Activated CD8-positive, alpha-beta T cell treated with anti-CD3 and anti-CD28 coated beads for 36 hours (primary cell): ENCODE measurements at regions of chr15 and their contacts with region 1.

Region 1: DNA sequence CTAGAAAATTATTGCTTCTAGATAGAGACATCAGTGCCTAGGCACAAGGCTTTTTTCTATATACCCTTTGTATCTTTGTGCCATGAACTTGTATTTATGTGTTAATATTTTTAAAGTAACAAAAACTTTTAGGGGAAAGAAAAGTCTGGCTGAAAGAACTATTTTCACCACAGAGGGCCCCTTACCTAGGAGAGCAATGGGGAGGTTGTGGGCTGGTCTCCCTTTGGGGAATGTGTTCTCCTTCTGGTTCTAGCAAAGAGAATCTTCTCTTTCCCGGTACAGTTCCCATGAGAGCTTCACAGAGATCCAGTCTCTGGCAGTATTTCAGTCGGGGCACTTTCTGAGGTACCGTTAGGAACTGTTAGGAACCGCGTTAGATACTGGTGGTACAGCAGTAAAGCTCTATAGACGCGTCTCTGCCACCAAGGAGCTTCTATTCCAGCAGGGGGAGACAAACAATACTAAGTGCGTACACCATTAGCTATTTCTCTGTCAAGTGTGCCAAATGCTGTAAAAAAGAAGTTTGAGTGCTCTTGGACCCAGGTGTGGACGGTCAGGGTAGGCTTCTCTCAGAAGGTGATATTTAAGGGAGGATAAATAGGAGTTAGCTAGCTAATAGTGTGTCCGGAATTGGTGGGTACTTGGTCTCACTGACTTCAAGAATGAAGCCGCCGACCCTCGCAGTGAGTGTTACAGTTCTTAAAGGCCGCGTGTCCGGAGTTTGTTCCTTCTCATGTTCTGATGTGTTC is 4.6 kb upstream of the EPB42 start:
- DNase-seq: peak; percentile 67
- ATAC-seq: peak; percentile 96
- H3K4me3 Mint-ChIP-seq: no peak overlapping the region
- H3K27ac Mint-ChIP-seq: no peak overlapping the region
- H3K4me1 Mint-ChIP-seq: peaks cover 7% of the 10 kb centered on the region
- H3K27me3 Mint-ChIP-seq: peaks cover 5% of the 10 kb centered on the region
- CTCF ChIP-seq: peak; percentile 82

Region 2: GRCh38 chr15:43194795-43195194 is 30.6 kb before region 1 on chr15:
- CTCF ChIA-PET with region 1: interaction called, 13 read pairs
- POLR2A ChIA-PET with region 1: no interaction called
- intact Hi-C with region 1: no loop called
- DNase-seq: no peak
- ATAC-seq: no peak
- H3K4me3 Mint-ChIP-seq: no peak overlapping the region
- H3K27ac Mint-ChIP-seq: no peak overlapping the region
- H3K4me1 Mint-ChIP-seq: no peaks in the 10 kb centered on the region
- H3K27me3 Mint-ChIP-seq: no peaks in the 10 kb centered on the region
- CTCF ChIP-seq: no peak

Region 3: GRCh38 chr15:43235536-43235935 is 10.2 kb after region 1 on chr15:
- CTCF ChIA-PET with region 1: interaction called, 12 read pairs
- POLR2A ChIA-PET with region 1: no interaction called
- intact Hi-C with region 1: no loop called
- DNase-seq: no peak
- ATAC-seq: no peak
- H3K4me3 Mint-ChIP-seq: no peak overlapping the region
- H3K27ac Mint-ChIP-seq: no peak overlapping the region
- H3K4me1 Mint-ChIP-seq: peaks cover 12% of the 10 kb centered on the region
- H3K27me3 Mint-ChIP-seq: no peaks in the 10 kb centered on the region
- CTCF ChIP-seq: no peak

Region 4: GRCh38 chr15:43268111-43269105 is 43.0 kb after region 1 on chr15:
- CTCF ChIA-PET with region 1: interaction called, 91 read pairs
- POLR2A ChIA-PET with region 1: no interaction called
- intact Hi-C with region 1: no loop called
- DNase-seq: peak; percentile 72
- ATAC-seq: peak; percentile 75
- H3K4me3 Mint-ChIP-seq: no peak overlapping the region
- H3K27ac Mint-ChIP-seq: no peak overlapping the region
- H3K4me1 Mint-ChIP-seq: no peaks in the 10 kb centered on the region
- H3K27me3 Mint-ChIP-seq: peaks cover 8% of the 10 kb centered on the region
- CTCF ChIP-seq: peak; percentile 58

Region 5: DNA sequence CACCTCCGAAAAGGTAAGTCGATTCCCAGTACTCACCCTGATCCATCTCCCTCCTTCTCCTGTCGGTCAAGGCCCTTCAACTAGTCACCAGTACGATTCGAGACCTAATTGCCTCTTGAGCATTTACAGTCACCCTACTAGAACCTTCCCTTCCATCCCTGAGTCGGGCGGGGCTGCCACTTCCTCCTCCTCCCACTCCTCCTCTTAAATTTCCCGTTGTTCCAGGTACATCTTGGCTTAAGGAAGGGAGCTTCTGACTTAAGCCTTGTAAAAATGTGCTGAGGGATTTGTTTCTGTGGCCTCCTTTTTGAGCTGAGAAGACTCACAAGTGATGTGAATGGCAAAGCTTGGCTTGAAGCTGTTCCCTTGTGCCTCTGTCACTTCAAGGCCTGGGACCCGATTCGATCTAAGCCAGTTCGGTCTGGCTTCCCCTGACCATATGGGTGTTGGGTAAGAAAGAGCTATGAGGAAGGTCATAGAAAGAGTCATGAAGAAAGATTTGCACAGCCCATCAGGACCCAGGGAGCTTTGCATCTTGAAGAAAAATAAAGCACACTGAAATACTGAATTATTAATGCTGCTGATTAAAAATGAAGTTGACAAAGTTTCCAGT is 76.9 kb after region 1 on chr15:
- CTCF ChIA-PET with region 1: interaction called, 11 read pairs
- POLR2A ChIA-PET with region 1: no interaction called
- intact Hi-C with region 1: no loop called
- DNase-seq: no peak
- ATAC-seq: no peak
- H3K4me3 Mint-ChIP-seq: no peak within 1 kb of the TSS
- H3K27ac Mint-ChIP-seq: no peak within 1 kb of the TSS
- H3K4me1 Mint-ChIP-seq: no peaks in the 10 kb centered on the region
- H3K27me3 Mint-ChIP-seq: peaks cover 16% of the 10 kb centered on the region
- CTCF ChIP-seq: no peak